K562 (cell line): ENCODE measurements at regions of chr12 and their contacts with region 1.

Region 1: DNA sequence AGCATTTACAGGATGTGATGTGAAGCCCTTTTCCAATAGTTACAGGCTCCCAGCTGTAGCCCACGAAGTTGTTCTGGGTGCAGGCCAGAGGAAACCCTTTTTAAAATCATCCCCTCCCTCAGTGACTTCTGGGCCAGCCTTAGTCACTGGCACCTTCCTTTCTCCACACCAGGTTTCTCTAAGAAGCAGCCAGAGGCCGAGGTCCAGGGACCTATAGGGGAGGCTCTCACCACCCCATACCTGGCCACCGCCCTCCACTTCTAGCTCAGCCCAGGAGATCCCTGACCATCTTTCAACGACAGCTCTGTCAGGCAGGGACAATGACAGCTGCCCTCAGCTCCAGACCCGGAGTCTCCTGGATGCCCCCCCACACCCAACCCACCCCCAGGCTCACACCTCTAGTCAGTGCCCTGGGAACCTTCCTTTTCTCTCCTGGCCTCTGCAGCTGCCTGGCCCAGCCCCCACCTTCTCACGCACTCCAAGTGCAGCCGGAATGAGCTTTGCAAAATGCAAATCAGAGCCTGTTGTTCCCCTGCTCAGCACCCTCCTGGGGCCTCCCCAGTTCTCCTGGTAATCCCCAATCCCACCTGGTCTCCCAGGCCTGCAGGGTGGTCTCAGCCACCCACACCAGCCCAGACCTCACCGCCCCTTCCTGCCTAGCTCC is 46.7 kb downstream of the TESC start:
- DNase-seq: no peak
- ATAC-seq: peak; percentile 31; the same call in 2 of the 3 replicates
- H3K4me3 ChIP-seq: no peak overlapping the region
- H3K27ac ChIP-seq: no peak overlapping the region
- H3K4me1 ChIP-seq: peaks cover 26 to 40% of the 10 kb centered on the region in 2 experiments; a peak in 4 of 5 replicates
- H3K27me3 ChIP-seq: no peaks in the 10 kb centered on the region
- CTCF ChIP-seq: no peak
- EP300 ChIP-seq: no peak
- POLR2A ChIP-seq: no peak
- RAD21 ChIP-seq: no peak

Region 2: GRCh38 chr12:117042171-117042842 is 10.2 kb before region 1 on chr12:
- CTCF ChIA-PET with region 1: no interaction called
- POLR2A ChIA-PET with region 1: interaction called, 14 read pairs
- in situ Hi-C with region 1: no loop called
- intact Hi-C with region 1: no loop called
- DNase-seq: peak; percentile 98
- ATAC-seq: peak; percentile 96
- H3K4me3 ChIP-seq: no peak overlapping the region
- H3K27ac ChIP-seq: peak overlapping the region; percentile 74
- H3K4me1 ChIP-seq: peaks cover 49 to 82% of the 10 kb centered on the region in 2 experiments
- H3K27me3 ChIP-seq: no peaks in the 10 kb centered on the region
- CTCF ChIP-seq: no peak; a peak in 1 of 6 replicates
- EP300 ChIP-seq: peak; percentile 99
- POLR2A ChIP-seq: no peak
- RAD21 ChIP-seq: peak in 1 of 2 experiments; percentile 13; a peak in 2 of 4 replicates